Breast epithelium (tissue), 4 donors: ENCODE measurements at regions of chr17 and their contacts with region 1.

Region 1: GRCh38 chr17:50079334-50080095 is 15.6 kb upstream of the PDK2 start:
- DNase-seq: no peak
- H3K4me3 ChIP-seq: no peak overlapping the region
- H3K27ac ChIP-seq: peak overlapping the region; percentile 34 to 56
- H3K4me1 ChIP-seq: no peaks in the 10 kb centered on the region
- H3K27me3 ChIP-seq: no peaks in the 10 kb centered on the region
- CTCF ChIP-seq: peak; percentile 9 to 71 (median 47)
- POLR2A ChIP-seq: no peak

Region 2: GRCh38 chr17:49843774-49844350 is 235.7 kb before region 1 on chr17:
- intact Hi-C with region 1: no loop called
- DNase-seq: no peak
- H3K4me3 ChIP-seq: no peak overlapping the region
- H3K27ac ChIP-seq: no peak overlapping the region
- H3K4me1 ChIP-seq: no peaks in the 10 kb centered on the region
- H3K27me3 ChIP-seq: no peaks in the 10 kb centered on the region
- CTCF ChIP-seq: no peak
- POLR2A ChIP-seq: no peak

Region 3: GRCh38 chr17:49913177-49914083 is 166.1 kb before region 1 on chr17:
- intact Hi-C with region 1: no loop called
- DNase-seq: no peak
- H3K4me3 ChIP-seq: no peak overlapping the region
- H3K27ac ChIP-seq: no peak overlapping the region
- H3K4me1 ChIP-seq: no peaks in the 10 kb centered on the region
- H3K27me3 ChIP-seq: peaks cover 7 to 23% of the 10 kb centered on the region in 2 donors
- CTCF ChIP-seq: no peak
- POLR2A ChIP-seq: no peak

Region 4: GRCh38 chr17:50035421-50035879 is 44.1 kb before region 1 on chr17:
- intact Hi-C with region 1: loop called (anchors 2 kb)
- DNase-seq: no peak
- H3K4me3 ChIP-seq: no peak overlapping the region
- H3K27ac ChIP-seq: no peak overlapping the region
- H3K4me1 ChIP-seq: no peaks in the 10 kb centered on the region
- H3K27me3 ChIP-seq: no peaks in the 10 kb centered on the region
- CTCF ChIP-seq: no peak
- POLR2A ChIP-seq: no peak